ENCODE measurements at regions of chr11 and their contacts with region 1.

Region 1: DNA sequence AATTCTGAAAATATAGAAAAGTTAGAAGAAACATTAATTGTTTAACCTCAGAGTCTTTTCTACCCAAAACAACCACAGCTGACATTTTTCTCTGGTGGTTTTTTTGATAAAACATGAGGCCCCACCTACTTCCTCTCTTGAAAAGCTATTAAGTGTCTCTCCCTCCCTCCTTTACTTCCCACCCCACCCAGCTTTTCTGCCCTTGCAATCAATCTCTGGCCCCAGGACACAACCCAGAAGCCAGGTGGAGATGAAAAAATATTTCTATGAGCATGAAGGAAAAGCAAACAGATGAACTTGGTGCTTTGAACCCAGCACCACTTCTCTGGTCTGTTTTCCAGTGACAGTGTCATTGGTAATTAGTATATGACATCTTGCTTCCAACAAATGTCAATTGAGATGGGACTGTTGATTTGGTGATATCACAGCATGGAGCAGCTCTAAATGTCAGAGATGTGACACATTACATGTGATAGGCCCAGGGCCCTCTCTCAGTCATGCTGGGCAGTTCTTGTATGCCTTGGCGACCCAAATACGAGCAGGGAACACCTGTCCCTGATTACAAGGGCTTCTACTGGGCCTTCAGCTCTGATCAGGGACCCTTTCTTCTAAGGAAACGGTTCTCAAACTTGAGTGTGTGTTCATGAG is 23.9 kb upstream of the TMPRSS13 start:
- DNase-seq: no peak
- H3K4me3 Mint-ChIP-seq: peak overlapping the region; percentile 61
- H3K27ac Mint-ChIP-seq: peak overlapping the region; percentile 83
- H3K4me1 Mint-ChIP-seq: peaks cover 70% of the 10 kb centered on the region
- H3K27me3 Mint-ChIP-seq: no peaks in the 10 kb centered on the region

Region 2: GRCh38 chr11:117621226-117621625 is 331.9 kb before region 1 on chr11:
- intact Hi-C with region 1: no loop called
- DNase-seq: no peak
- H3K4me3 Mint-ChIP-seq: no peak overlapping the region
- H3K27ac Mint-ChIP-seq: no peak overlapping the region
- H3K4me1 Mint-ChIP-seq: no peaks in the 10 kb centered on the region
- H3K27me3 Mint-ChIP-seq: peaks cover 12% of the 10 kb centered on the region

Region 3: GRCh38 chr11:117887981-117888566 is 65.1 kb before region 1 on chr11:
- intact Hi-C with region 1: no loop called
- DNase-seq: no peak
- H3K4me3 Mint-ChIP-seq: no peak overlapping the region
- H3K27ac Mint-ChIP-seq: no peak overlapping the region
- H3K4me1 Mint-ChIP-seq: no peaks in the 10 kb centered on the region
- H3K27me3 Mint-ChIP-seq: peaks cover 25% of the 10 kb centered on the region

Region 4: GRCh38 chr11:117930668-117931330 is 22.3 kb before region 1 on chr11:
- intact Hi-C with region 1: loop called (anchors 2 kb)
- DNase-seq: no peak
- H3K4me3 Mint-ChIP-seq: no peak overlapping the region
- H3K27ac Mint-ChIP-seq: peak overlapping the region; percentile 90
- H3K4me1 Mint-ChIP-seq: peaks cover 55% of the 10 kb centered on the region
- H3K27me3 Mint-ChIP-seq: no peaks in the 10 kb centered on the region

Region 5: GRCh38 chr11:117970400-117971024 is 17.4 kb after region 1 on chr11:
- intact Hi-C with region 1: loop called (anchors 1 kb)
- DNase-seq: no peak
- H3K4me3 Mint-ChIP-seq: peak overlapping the region; percentile 34
- H3K27ac Mint-ChIP-seq: peak overlapping the region; percentile 54
- H3K4me1 Mint-ChIP-seq: peaks cover 63% of the 10 kb centered on the region
- H3K27me3 Mint-ChIP-seq: no peaks in the 10 kb centered on the region

Region 6: GRCh38 chr11:118060869-118061268 is 107.7 kb after region 1 on chr11:
- intact Hi-C with region 1: no loop called
- DNase-seq: no peak
- H3K4me3 Mint-ChIP-seq: no peak overlapping the region
- H3K27ac Mint-ChIP-seq: no peak overlapping the region
- H3K4me1 Mint-ChIP-seq: peaks cover 1% of the 10 kb centered on the region
- H3K27me3 Mint-ChIP-seq: peaks cover 11% of the 10 kb centered on the region